ENCODE measurements at regions of chr1 and their contacts with region 1.

Region 1: GRCh38 chr1:38026592-38027200 is 14.2 kb downstream of the UTP11 start:
- DNase-seq: no peak
- H3K4me3 Mint-ChIP-seq: no peak overlapping the region
- H3K27ac Mint-ChIP-seq: peak overlapping the region; percentile 48
- H3K4me1 Mint-ChIP-seq: peaks cover 59% of the 10 kb centered on the region
- H3K27me3 Mint-ChIP-seq: peaks cover 2% of the 10 kb centered on the region

Region 2: GRCh38 chr1:37946703-37947360 is 79.9 kb before region 1 on chr1 and contains the start of gene INPP5B:
- intact Hi-C with region 1: no loop called
- DNase-seq: peak; percentile 78
- H3K4me3 Mint-ChIP-seq: peak within 1 kb of the TSS; percentile 91
- H3K27ac Mint-ChIP-seq: peak within 1 kb of the TSS; percentile 96
- H3K4me1 Mint-ChIP-seq: peaks cover 19% of the 10 kb centered on the region
- H3K27me3 Mint-ChIP-seq: no peaks in the 10 kb centered on the region
- total RNA-seq, gene INPP5B: 23.6 and 27.2 TPM in 2 replicates

Region 3: GRCh38 chr1:38012363-38013226 is 14.1 kb before region 1 on chr1 and contains the start of gene UTP11:
- intact Hi-C with region 1: loop called (anchors 1 kb)
- DNase-seq: peak; percentile 87
- H3K4me3 Mint-ChIP-seq: peak within 1 kb of the TSS; percentile 96
- H3K27ac Mint-ChIP-seq: peak within 1 kb of the TSS; percentile 93
- H3K4me1 Mint-ChIP-seq: peaks cover 54% of the 10 kb centered on the region
- H3K27me3 Mint-ChIP-seq: no peaks in the 10 kb centered on the region
- total RNA-seq, gene UTP11: 106 and 108 TPM in 2 replicates

Region 4: GRCh38 chr1:38071312-38072256 is 44.9 kb after region 1 on chr1:
- intact Hi-C with region 1: loop called (anchors 1 kb)
- DNase-seq: no peak
- H3K4me3 Mint-ChIP-seq: no peak overlapping the region
- H3K27ac Mint-ChIP-seq: no peak overlapping the region
- H3K4me1 Mint-ChIP-seq: no peaks in the 10 kb centered on the region
- H3K27me3 Mint-ChIP-seq: peaks cover 24% of the 10 kb centered on the region

Region 5: DNA sequence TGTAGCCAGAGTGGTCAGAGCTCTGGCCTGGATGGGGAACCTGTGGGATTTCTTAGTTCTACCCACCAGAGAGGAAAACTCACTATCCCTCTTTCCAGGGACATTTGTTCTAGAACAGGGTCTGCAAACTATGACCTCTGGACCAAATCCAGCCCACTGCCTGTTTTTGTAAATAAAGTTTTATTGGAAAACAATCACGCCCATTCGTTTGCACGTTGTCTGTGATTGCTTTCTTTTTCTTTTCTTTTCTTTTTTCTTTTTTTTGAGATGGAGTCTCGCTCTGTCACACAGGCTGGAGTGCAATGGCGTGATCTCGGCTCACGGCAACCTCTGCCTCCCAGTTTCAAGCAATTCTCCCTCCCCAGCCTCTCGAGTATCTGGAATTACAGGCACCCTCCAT is 136.2 kb after region 1 on chr1:
- intact Hi-C with region 1: no loop called
- DNase-seq: no peak
- H3K4me3 Mint-ChIP-seq: no peak overlapping the region
- H3K27ac Mint-ChIP-seq: no peak overlapping the region
- H3K4me1 Mint-ChIP-seq: no peaks in the 10 kb centered on the region
- H3K27me3 Mint-ChIP-seq: peaks cover 9% of the 10 kb centered on the region

Region 6: DNA sequence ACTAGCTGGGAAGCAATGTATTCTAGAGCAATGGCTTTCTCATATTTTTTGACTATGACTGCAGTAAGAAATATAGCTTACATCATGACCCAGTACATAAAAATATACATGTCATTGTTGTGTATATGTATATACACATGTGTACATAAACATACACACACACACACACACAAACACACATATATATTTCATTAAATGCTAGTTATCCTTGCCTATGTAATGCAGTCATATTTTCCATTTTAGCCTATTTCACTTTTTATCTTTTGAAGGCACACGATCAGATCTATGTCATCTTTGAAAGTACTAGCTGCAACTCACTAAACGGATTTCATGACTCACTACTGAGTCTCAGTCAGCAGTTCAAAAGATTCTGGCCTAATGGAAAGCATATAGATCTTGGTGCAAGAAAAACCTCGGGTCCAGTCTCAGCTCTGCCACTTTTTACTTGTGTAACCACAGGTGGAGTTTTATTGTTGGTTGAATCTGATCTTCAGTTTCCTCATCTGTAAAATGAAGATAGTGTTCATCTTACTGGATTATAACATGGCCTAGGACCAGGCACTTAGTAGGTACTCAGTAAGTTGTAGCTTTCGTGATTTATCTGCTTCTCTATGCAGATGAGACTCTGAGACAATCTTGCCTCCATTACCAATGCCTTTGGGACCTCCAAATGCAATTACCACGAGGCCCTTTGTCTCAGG is 507.2 kb after region 1 on chr1:
- intact Hi-C with region 1: loop called (anchors 2 kb)
- DNase-seq: no peak
- H3K4me3 Mint-ChIP-seq: no peak overlapping the region
- H3K27ac Mint-ChIP-seq: peak overlapping the region; percentile 59
- H3K4me1 Mint-ChIP-seq: peaks cover 9% of the 10 kb centered on the region
- H3K27me3 Mint-ChIP-seq: peaks cover 10% of the 10 kb centered on the region

Region 7: DNA sequence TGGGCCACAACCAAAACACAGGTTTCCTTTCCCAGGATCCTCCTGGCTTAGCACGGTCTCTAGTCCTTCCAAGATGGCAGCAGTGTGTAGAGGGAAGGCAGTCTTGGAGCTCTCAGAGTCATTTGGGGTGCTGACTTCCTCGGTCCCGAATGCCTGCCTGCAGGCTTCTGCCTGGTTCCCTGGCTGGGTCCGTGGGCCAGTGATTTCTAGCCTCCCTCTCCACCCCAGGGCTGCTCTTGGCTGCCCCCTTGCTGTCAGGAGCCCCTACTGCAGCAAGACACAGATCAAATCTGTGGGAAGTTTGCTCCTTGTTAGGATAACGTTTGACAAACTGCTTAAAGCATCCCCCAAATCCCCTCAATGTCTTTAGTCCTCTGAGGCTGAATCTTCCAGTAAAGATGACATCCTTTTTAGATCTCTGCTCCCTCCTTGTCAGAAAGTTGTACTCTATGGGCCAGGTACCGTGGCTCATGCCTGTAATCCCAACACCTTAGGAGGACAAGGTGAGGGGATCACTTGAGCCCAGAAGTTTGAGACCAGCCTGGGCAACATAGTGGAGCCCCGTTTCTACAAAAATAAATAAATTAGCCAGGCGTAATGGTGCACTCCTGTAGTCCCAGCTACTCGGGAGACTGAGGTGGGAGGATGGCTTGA is 560.4 kb after region 1 on chr1:
- intact Hi-C with region 1: loop called (anchors 1 kb)
- DNase-seq: peak; percentile 22
- H3K4me3 Mint-ChIP-seq: no peak overlapping the region
- H3K27ac Mint-ChIP-seq: no peak overlapping the region
- H3K4me1 Mint-ChIP-seq: peaks cover 11% of the 10 kb centered on the region
- H3K27me3 Mint-ChIP-seq: peaks cover 16% of the 10 kb centered on the region

Region 8: GRCh38 chr1:38859561-38860453 is 833.1 kb after region 1 on chr1 and contains the start of gene RRAGC:
- intact Hi-C with region 1: loop called (anchors 5 kb)
- DNase-seq: peak; percentile 98
- H3K4me3 Mint-ChIP-seq: peak within 1 kb of the TSS; percentile 89
- H3K27ac Mint-ChIP-seq: peak within 1 kb of the TSS; percentile 74
- H3K4me1 Mint-ChIP-seq: peaks cover 41% of the 10 kb centered on the region
- H3K27me3 Mint-ChIP-seq: no peaks in the 10 kb centered on the region
- total RNA-seq, gene RRAGC: 12.9 and 13.4 TPM in 2 replicates